ENCODE measurements at regions of chr12 and their contacts with region 1.

Region 1: DNA sequence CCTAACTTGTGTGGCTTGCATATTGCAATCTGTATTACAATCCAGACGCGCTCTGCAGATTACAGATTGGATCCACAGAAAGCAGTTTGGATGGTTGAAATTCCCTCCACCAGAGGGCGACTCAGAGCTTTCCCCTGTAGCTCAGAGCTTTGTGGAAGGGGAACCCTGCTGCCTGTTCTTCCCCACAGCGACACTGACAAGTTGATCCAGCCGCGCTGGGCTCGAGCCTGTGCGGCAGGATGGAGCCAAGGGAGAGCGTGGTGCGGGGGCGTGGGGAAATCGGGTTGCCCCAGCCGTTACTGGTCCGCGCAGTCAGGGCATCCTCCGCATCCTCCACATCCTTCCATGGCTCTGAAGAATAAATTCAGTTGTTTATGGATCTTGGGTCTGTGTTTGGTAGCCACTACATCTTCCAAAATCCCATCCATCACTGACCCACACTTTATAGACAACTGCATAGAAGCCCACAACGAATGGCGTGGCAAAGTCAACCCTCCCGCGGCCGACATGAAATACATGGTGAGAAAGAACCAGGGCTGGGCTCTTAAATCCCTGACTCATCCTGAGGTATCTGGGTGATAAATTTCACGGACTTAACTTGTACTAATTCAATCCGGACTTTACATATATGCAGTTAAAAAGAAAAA is at the start of gene GLIPR1L1:
- DNase-seq: peak; percentile 72
- CTCF ChIP-seq: peak; percentile 82

Region 2: GRCh38 chr12:75366629-75367028 is 32.1 kb after region 1 on chr12:
- CTCF ChIA-PET with region 1: interaction called, 11 read pairs
- POLR2A ChIA-PET with region 1: no interaction called
- DNase-seq: no peak
- CTCF ChIP-seq: no peak

Region 3: DNA sequence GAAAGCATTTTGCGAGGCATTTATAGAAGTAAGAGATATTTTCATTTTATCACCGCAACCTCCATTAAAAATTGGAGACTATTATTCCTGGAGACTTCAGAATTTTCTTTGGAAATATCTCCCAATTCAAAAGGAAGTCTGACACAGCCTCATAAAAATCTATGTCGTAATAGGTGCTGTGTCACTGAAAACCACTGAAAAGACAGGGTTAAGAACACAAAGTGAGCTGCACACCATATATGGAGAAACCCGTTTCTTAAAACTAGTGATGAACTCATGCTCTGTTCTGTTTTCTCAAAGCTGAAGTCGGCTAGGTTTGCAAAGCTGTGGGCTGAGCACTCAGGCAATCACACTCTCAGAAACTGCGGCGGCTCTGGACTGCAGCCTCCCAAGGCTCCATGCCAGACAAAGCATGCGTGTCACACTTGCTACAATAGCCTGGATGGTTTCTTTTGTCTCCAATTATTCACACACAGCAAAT is 146.0 kb after region 1 on chr12 and contains the start of gene GLIPR1:
- CTCF ChIA-PET with region 1: interaction called, 93 read pairs
- POLR2A ChIA-PET with region 1: no interaction called
- DNase-seq: peak; percentile 69
- CTCF ChIP-seq: no peak

Region 4: GRCh38 chr12:75505706-75506312 is 171.3 kb after region 1 on chr12:
- CTCF ChIA-PET with region 1: interaction called, 20 read pairs
- POLR2A ChIA-PET with region 1: no interaction called
- DNase-seq: no peak
- CTCF ChIP-seq: peak; percentile 60

Region 5: DNA sequence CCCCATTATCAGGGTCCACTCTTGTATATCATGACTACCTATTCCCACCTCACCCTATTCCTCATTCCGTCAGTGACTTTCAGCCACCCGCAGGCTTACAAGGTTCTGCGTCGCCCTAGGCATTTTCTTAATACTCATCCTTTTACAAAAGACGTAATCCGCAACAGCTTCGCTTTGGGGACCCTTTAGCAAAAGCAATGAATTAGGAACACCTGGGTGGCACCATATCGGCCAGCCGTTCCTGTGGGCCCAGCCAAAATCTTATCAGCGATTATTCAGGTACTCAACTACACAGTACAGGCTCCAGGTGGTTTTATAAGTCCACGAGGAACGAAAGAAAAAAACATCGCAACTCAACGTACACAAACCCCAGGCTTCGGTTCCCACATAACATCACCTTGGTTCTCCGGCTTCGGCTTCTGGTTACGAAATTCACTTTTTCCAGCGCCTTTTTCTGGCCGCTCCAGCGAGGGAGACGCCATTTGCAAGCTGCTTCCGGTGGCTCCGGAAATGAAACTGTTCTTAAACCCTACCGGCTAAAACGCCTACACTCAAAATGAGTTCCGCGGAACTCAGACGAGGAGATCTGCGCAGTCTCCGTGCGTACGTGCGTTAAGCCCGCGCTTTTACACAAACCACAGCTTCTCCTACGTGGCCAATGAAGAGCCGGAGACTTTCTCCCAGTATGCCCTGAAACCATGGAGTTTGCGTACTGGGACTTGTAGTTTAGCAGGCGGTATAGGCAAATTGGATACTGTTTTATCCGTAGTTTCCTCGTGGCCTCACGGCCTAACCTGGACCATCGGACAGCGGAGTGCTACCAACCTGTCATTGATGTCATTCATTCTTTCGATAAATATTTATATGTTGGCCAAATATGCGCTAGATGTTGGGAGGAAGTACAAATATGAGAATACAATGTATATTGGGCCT is 176.9 kb after region 1 on chr12 and contains the start of gene KRR1:
- CTCF ChIA-PET with region 1: interaction called, 10 read pairs
- POLR2A ChIA-PET with region 1: no interaction called
- DNase-seq: peak; percentile 76
- CTCF ChIP-seq: no peak

Measured in GM10248 (cell line).